Activated T-helper 1 cell treated with anti-CD3 and anti-CD28 coated beads, Interleukin-12 subunit alpha, Interleukin-12 subunit beta, Interleukin-2, Interleukin-4 antibody, amounts not matched to agents 30 ng/mL and 10 ng/mL and 1 ng/mL, durations not matched to agents 14 hours and 24 hours and 36 hours (primary cell): ENCODE measurements at regions of chrX and their contacts with region 1.

Region 1: DNA sequence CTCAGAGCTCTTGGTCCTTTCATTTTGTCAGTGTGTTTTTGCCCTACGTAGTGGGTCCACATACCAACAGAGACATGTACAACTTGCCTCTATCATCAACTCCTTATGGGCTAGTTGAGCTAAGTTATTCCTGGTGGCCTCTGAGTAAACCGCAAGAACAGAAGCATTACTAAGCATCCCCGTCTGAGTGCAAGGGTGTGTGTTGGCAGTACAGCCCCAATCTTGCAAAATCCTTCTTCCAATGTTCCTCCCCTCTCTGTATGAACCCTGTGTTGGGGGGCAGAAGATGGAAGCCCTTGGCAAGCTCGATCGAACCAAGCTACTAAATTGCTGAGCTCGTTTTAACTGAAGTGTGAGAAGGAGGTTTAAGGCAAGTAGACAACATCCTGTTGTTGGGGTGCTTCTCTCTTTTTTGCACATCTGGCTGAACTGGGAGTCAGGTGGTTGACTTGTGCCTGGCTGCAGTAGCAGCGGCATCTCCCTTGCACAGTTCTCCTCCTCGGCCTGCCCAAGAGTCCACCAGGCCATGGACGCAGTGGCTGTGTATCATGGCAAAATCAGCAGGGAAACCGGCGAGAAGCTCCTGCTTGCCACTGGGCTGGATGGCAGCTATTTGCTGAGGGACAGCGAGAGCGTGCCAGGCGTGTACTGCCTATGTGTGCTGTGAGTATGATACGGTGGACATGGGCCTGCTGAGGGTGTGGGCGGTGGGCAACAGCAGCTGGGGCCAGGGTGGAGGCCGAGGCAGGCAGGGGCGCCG is at the start of gene SH2D1A:
- DNase-seq: no peak
- H3K4me3 Mint-ChIP-seq: peak within 1 kb of the TSS; percentile 92
- H3K27ac Mint-ChIP-seq: peak within 1 kb of the TSS; percentile 97
- H3K4me1 Mint-ChIP-seq: peaks cover 49% of the 10 kb centered on the region
- H3K27me3 Mint-ChIP-seq: no peaks in the 10 kb centered on the region
- total RNA-seq, gene SH2D1A: 50.4 and 56.3 TPM in 2 replicates

Region 2: GRCh38 chrX:123833387-123833786 is 512.9 kb before region 1 on chrX:
- intact Hi-C with region 1: no loop called
- DNase-seq: peak; percentile 27
- H3K4me3 Mint-ChIP-seq: no peak overlapping the region
- H3K27ac Mint-ChIP-seq: no peak overlapping the region
- H3K4me1 Mint-ChIP-seq: no peaks in the 10 kb centered on the region
- H3K27me3 Mint-ChIP-seq: no peaks in the 10 kb centered on the region

Region 3: GRCh38 chrX:123859846-123860838 is 486.2 kb before region 1 on chrX and contains the start of gene XIAP:
- intact Hi-C with region 1: loop called (anchors 10 kb)
- DNase-seq: peak; percentile 66
- H3K4me3 Mint-ChIP-seq: peak within 1 kb of the TSS; percentile 89
- H3K27ac Mint-ChIP-seq: peak within 1 kb of the TSS; percentile 90
- H3K4me1 Mint-ChIP-seq: peaks cover 17% of the 10 kb centered on the region
- H3K27me3 Mint-ChIP-seq: no peaks in the 10 kb centered on the region
- total RNA-seq, gene XIAP: 35.0 and 39.1 TPM in 2 replicates

Region 4: DNA sequence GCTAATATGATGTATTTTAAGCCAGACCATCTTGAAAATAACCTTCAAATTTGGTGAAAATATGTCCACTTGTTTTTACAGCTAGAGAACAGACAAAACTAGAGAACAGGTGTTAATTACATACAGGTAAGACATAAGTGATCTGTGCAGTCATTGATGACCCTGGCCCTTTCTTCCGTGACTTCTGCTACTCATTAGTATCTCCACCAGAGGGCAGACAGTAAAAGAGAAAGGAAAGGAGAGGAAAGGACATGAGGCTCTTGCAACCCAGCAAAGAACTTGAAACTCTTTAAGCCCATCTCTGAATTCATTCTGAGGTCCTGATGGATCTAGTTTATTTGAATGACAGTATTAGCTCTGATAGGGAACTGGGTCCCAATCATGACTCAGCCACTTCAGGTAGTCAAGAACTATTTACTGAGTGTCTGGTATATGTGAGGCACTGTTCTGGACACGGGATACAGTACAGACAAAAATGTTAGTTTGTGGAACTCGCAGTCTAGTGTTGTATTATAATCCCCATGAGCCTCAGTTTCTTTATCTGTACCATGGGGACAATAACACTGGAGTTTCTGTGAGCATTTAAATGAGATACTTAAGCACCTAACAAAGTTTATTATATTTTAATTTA is 134.9 kb before region 1 on chrX:
- intact Hi-C with region 1: loop called (anchors 1 kb)
- DNase-seq: peak; percentile 3
- H3K4me3 Mint-ChIP-seq: no peak overlapping the region
- H3K27ac Mint-ChIP-seq: no peak overlapping the region
- H3K4me1 Mint-ChIP-seq: peaks cover 44% of the 10 kb centered on the region
- H3K27me3 Mint-ChIP-seq: peaks cover 5% of the 10 kb centered on the region

Region 5: DNA sequence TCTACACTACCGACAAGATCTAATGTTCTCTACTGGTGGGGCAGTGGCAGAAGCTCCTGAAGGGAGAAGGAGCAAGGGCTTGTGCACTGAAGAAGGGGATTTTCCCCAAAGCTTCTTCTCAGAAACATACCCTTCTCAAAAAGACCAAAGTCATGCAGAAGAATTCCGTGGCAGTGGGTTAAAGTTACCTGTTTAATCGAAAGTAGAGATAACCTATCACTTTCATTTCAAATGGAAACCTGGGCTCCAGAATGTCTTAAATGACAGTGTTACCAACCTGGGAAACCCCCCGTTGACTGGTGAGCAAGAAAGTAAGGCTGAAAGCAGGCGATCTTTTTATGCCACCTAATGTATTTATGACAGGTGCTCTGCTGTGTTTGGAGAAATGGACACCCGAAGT is 106.4 kb before region 1 on chrX:
- intact Hi-C with region 1: loop called (anchors 1 kb)
- DNase-seq: peak; percentile 34
- H3K4me3 Mint-ChIP-seq: peak overlapping the region; percentile 59
- H3K27ac Mint-ChIP-seq: peak overlapping the region; percentile 87
- H3K4me1 Mint-ChIP-seq: peaks cover 45% of the 10 kb centered on the region
- H3K27me3 Mint-ChIP-seq: peaks cover 4% of the 10 kb centered on the region

Region 6: DNA sequence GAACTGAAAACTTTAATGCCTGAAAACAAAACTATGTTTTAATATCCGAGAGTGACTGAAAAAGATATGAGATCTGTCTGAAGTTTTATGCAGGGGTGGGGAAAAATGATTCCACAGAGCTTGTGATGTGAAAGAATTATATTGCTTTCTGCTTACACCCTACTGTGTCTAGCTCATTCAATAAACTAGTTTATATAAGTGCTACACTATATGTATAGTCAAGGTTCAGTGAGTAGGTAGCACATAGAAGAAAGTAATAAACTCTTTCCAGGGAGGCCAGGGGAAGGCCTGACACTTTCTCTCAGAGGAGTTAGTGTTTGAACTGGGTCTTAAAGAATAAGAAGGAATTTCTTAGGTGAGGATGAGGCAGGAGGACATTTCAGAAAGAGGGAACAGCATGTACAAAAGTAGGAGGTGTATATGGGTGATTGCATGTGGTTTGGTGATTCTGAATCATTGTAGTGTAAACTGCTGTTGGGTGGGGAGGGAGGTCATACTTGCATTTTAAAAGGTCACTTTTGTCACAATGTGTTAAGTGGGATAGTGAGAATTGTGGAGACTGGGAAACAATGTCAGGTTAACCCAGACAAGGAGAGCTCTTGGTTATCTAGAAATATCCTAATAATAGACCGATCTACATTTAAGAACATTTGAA is 38.9 kb before region 1 on chrX:
- intact Hi-C with region 1: no loop called
- DNase-seq: no peak
- H3K4me3 Mint-ChIP-seq: no peak overlapping the region
- H3K27ac Mint-ChIP-seq: peak overlapping the region; percentile 9
- H3K4me1 Mint-ChIP-seq: peaks cover 12% of the 10 kb centered on the region
- H3K27me3 Mint-ChIP-seq: no peaks in the 10 kb centered on the region

Region 7: GRCh38 chrX:124325732-124326131 is 20.6 kb before region 1 on chrX:
- intact Hi-C with region 1: loop called (anchors 2 kb)
- DNase-seq: no peak
- H3K4me3 Mint-ChIP-seq: no peak overlapping the region
- H3K27ac Mint-ChIP-seq: no peak overlapping the region
- H3K4me1 Mint-ChIP-seq: peaks cover 15% of the 10 kb centered on the region
- H3K27me3 Mint-ChIP-seq: peaks cover 2% of the 10 kb centered on the region

Region 8: GRCh38 chrX:124476562-124476961 is 130.3 kb after region 1 on chrX:
- intact Hi-C with region 1: no loop called
- DNase-seq: no peak
- H3K4me3 Mint-ChIP-seq: no peak overlapping the region
- H3K27ac Mint-ChIP-seq: no peak overlapping the region
- H3K4me1 Mint-ChIP-seq: no peaks in the 10 kb centered on the region
- H3K27me3 Mint-ChIP-seq: peaks cover 1% of the 10 kb centered on the region

Region 9: DNA sequence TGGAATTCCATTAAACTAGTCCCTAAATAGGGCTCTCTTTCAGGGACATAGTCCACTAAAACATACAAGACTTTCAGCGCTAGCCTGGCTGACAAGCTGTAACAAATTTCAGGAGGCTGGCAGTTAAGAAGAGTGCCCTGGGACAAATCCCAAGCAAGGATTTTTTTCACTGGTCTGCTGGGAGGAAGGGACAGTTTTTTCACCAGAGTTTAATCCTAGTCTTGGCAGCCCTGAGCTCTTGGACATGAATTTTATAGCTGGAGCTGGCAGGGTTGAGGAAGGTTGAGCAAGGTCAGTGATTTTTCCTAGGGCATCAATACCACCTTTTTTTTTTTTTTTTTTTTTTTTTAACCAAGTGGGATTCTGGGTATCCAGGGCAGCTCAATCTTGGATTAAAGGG is 184.5 kb after region 1 on chrX:
- intact Hi-C with region 1: no loop called
- DNase-seq: no peak
- H3K4me3 Mint-ChIP-seq: no peak overlapping the region
- H3K27ac Mint-ChIP-seq: no peak overlapping the region
- H3K4me1 Mint-ChIP-seq: no peaks in the 10 kb centered on the region
- H3K27me3 Mint-ChIP-seq: no peaks in the 10 kb centered on the region

Region 10: GRCh38 chrX:125295337-125295736 is 949.0 kb after region 1 on chrX:
- intact Hi-C with region 1: loop called (anchors 5 kb)
- DNase-seq: no peak
- H3K4me3 Mint-ChIP-seq: peak overlapping the region; percentile 3
- H3K27ac Mint-ChIP-seq: peak overlapping the region; percentile 61
- H3K4me1 Mint-ChIP-seq: peaks cover 18% of the 10 kb centered on the region
- H3K27me3 Mint-ChIP-seq: no peaks in the 10 kb centered on the region